AG04449 (cell line): ENCODE measurements at regions of chr15 and their contacts with region 1.

Region 1: GRCh38 chr15:55775316-55775715 is 32.4 kb upstream of the PRTG start:
- DNase-seq: no peak
- H3K4me3 ChIP-seq: no peak overlapping the region
- CTCF ChIP-seq: no peak

Region 2: GRCh38 chr15:55789066-55789660 is 13.8 kb after region 1 on chr15:
- CTCF ChIA-PET with region 1: interaction called, 31 read pairs
- POLR2A ChIA-PET with region 1: no interaction called
- DNase-seq: no peak
- H3K4me3 ChIP-seq: no peak overlapping the region
- CTCF ChIP-seq: peak; percentile 42

Region 3: DNA sequence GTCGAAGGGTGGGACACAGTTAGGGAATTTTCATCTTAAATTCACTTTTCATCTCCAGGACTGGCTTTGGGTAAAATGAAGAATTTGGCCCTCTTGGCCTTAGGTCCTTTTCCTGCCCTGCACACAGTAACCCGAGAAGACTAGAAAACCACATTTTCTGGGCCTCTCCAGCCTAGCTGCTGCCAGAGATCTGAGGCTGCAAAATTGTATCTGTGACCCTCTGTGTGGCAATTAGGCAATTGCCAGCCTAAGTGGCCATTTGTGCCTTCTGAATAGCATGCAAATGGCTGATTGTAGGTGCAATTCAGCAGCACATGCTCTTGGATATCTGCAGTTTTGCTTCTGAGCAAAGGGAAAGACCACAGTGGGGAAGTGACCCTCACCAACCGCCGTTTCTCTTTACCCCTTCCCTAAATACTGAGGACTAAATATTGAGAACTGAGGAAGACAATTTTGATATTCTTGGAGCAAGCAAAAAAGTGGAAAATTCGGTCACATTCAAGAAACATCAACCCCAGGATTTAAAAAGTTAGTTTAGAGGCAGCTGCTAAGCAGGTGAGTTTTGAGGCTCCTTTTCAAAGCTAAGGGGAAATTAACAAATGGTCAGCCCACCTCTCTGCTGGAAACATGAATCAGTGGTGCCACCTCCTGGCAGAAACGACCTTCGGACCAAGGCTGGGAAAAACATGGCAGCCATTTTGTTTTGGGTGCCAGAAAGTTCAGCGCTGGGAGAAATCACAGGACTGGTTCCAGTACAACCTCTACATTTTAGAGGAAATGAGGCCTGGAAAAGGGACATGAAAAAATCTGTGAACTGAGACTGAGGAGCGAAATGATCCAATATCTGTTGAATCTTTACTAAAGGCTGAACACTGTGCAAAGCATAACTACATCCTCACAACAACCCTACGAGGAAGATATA is 24.2 kb after region 1 on chr15:
- CTCF ChIA-PET with region 1: interaction called, 14 read pairs
- POLR2A ChIA-PET with region 1: no interaction called
- DNase-seq: no peak
- H3K4me3 ChIP-seq: no peak overlapping the region
- CTCF ChIP-seq: peak; percentile 46